B cell (primary cell): ENCODE measurements at regions of chr13 and their contacts with region 1.

Region 1: GRCh38 chr13:41019011-41019487 is at the start of gene ELF1:
- DNase-seq: peak; percentile 91
- ATAC-seq: peak; percentile 89
- H3K4me3 ChIP-seq: peak within 1 kb of the TSS; percentile 65 to 99 (median 75)
- H3K4me3 Mint-ChIP-seq: peak within 1 kb of the TSS; percentile 94
- H3K27ac ChIP-seq: peak within 1 kb of the TSS; percentile 96 to 100
- H3K27ac Mint-ChIP-seq: peak within 1 kb of the TSS; percentile 98
- H3K4me1 ChIP-seq: peaks cover 29 to 33% of the 10 kb centered on the region in 2 donors
- H3K4me1 Mint-ChIP-seq: peaks cover 52% of the 10 kb centered on the region
- H3K27me3 ChIP-seq: no peaks in the 10 kb centered on the region
- H3K27me3 Mint-ChIP-seq: no peaks in the 10 kb centered on the region
- CTCF ChIP-seq: no peak
- total RNA-seq, gene ELF1: 185 and 186 TPM in 2 replicates

Region 2: DNA sequence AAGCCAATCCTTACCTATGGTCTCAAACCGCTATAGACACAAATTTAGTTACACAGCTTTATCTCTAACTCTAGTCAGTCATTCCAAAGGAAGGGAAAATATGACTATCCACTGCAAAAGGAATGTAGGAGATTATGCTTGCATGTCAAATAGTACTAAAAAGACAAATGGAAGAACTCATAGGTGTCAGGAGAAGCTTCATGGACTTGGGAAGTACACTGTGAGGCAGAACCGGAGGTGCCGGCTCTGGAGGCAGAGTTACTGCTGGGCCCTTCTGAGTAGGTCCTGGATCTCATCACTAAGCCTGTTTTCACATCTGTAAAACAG is 450.1 kb before region 1 on chr13:
- CTCF ChIA-PET with region 1: no interaction called
- POLR2A ChIA-PET with region 1: no interaction called
- intact Hi-C with region 1: no loop called
- DNase-seq: no peak
- ATAC-seq: no peak
- H3K4me3 ChIP-seq: no peak overlapping the region
- H3K4me3 Mint-ChIP-seq: peak overlapping the region; percentile 36
- H3K27ac ChIP-seq: peak overlapping the region; percentile 4 to 44
- H3K27ac Mint-ChIP-seq: no peak overlapping the region
- H3K4me1 ChIP-seq: peaks cover 87 to 90% of the 10 kb centered on the region in 2 donors
- H3K4me1 Mint-ChIP-seq: peaks cover 85% of the 10 kb centered on the region
- H3K27me3 ChIP-seq: no peaks in the 10 kb centered on the region
- H3K27me3 Mint-ChIP-seq: no peaks in the 10 kb centered on the region
- CTCF ChIP-seq: no peak

Region 3: GRCh38 chr13:41004875-41005693 is 14.0 kb before region 1 on chr13:
- CTCF ChIA-PET with region 1: interaction called, 6 read pairs
- POLR2A ChIA-PET with region 1: interaction called, 8 read pairs
- intact Hi-C with region 1: loop called (anchors 1 kb)
- DNase-seq: peak; percentile 68
- ATAC-seq: peak; percentile 78
- H3K4me3 ChIP-seq: peak overlapping the region in 3 of 5 experiments; percentile 10 to 31 (median 11)
- H3K4me3 Mint-ChIP-seq: peak overlapping the region; percentile 57
- H3K27ac ChIP-seq: peak overlapping the region; percentile 61 to 79
- H3K27ac Mint-ChIP-seq: peak overlapping the region; percentile 70
- H3K4me1 ChIP-seq: peaks cover 68 to 82% of the 10 kb centered on the region in 2 donors
- H3K4me1 Mint-ChIP-seq: peaks cover 69% of the 10 kb centered on the region
- H3K27me3 ChIP-seq: no peaks in the 10 kb centered on the region
- H3K27me3 Mint-ChIP-seq: no peaks in the 10 kb centered on the region
- CTCF ChIP-seq: no peak